Mammary epithelial cell (primary cell): ENCODE measurements at regions of chr6 and their contacts with region 1.

Region 1: DNA sequence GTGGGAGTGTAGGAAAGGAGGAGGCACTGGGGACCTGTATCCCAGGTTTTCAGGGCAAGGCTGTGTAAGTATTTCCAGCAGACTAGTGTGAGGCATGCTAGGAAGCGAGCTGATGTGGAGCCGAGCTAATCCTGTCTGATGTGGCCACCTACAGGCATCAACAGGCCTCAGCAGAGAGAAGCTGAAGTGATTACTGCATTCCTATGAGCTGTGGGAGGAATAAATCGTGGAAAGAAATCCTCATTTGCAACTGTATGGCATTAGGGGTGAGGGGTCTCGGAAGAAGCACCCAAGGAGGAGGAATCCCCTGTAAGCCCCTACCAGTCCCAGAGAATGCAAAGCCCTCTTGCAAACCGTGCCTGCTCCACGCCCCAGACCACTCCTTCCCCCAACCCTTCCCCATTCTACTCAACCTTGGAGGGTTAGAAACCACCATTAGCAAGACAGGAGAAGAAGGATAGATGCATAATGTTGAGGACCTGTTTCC is 41.6 kb downstream of the C6orf15 start:
- DNase-seq: peak; percentile 74
- H3K4me3 ChIP-seq: no peak overlapping the region
- H3K27ac ChIP-seq: no peak overlapping the region
- H3K4me1 ChIP-seq: peaks cover 4% of the 10 kb centered on the region
- H3K27me3 ChIP-seq: no peaks in the 10 kb centered on the region
- CTCF ChIP-seq: peak; percentile 87 to 93

Region 2: DNA sequence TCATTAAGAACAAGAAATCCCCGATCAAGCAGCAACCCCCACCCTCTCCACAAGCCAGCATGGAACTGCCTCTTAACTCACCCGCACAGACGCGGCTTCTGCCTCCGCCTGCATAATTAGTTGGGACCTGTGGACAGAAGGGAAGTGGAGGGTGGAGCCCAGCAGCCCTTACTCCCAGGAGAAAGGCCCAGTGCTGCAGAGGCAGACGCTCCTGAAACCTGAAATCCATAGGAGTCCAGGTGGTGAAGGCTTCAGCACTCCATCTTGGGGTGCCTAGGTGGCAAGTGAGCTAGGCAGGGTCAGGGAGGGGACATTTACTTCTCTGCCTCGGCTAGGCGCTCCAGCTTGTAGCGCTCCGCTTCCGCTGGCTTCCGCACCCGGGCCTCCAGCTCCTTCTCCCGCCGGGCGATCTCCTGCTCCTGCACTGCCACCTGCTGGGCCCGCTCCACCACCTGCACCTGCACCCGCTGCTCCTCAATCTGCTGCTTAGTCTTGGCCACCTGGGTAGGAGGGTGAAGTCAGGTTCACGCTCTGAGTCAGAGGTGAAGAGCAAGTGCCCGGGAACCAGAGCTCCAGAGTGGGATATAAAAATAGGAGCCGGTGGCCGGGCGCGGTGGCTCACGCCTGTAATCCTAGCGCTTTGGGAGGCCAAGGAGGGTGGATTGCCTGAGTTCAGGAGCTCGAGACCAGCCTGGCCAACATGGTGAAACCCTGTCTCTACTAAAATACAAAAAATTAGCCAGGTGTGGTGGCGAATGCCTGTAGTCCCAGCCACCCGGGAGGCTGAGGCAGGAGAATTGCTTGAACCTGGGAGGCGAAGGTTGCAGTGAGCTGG is 339.9 kb before region 1 on chr6:
- CTCF ChIA-PET with region 1: no interaction called
- dilution Hi-C with region 1: loop called (anchors 5 kb)
- in situ Hi-C with region 1: no loop called
- intact Hi-C with region 1: no loop called
- DNase-seq: peak; percentile 88
- H3K4me3 ChIP-seq: no peak overlapping the region
- H3K27ac ChIP-seq: no peak overlapping the region
- H3K4me1 ChIP-seq: peaks cover 5% of the 10 kb centered on the region
- H3K27me3 ChIP-seq: no peaks in the 10 kb centered on the region
- CTCF ChIP-seq: peak; percentile 81 to 95

Region 3: DNA sequence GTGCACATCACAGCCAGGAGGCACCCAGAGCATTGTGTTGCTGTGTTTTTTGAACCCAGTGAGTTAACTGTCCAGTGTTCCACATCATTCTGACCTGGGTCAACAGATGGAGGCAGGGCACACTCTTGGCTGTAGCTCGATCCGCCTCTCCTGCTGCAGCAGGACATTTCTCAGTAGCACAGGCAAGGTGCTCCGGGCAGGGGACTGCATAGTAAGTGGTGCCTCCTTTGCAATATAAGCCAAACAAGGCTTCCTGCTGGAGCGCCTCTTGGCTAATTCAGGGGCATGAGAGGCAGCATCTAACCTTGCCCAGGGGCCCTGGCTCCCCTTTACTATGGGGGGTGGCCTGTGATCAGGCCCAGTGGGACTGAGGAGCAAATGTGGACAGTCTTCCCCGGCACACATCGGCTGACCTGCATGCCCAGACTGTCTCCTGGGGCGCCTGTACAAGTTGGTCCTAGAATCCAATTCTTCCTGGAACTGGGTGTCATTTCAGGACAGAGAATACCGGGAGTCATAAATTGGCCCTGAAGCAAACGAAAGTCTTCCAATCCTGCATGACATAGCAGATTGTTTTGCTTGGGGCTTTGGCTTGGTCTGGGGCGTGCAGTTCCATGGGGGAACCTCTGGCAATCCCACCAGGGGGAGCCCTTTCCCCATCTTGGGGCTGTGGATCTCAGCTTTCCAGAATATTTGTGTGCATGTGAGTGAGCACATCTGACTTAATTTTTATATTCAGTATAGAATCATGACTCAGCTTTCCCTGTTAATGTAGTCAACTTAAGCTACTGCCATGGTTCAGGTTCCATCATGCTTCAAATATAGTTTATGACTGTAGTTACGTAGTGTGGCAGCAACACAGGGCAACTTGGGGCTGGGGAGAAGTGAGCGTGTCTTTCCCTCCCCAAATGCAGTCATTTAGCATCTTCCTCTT is 242.5 kb before region 1 on chr6:
- CTCF ChIA-PET with region 1: interaction called, 7 read pairs
- dilution Hi-C with region 1: loop called (anchors 5 kb)
- in situ Hi-C with region 1: no loop called
- intact Hi-C with region 1: loop called (anchors 1 kb)
- DNase-seq: peak; percentile 88
- H3K4me3 ChIP-seq: no peak overlapping the region
- H3K27ac ChIP-seq: peak overlapping the region; percentile 58
- H3K4me1 ChIP-seq: peaks cover 28% of the 10 kb centered on the region
- H3K27me3 ChIP-seq: no peaks in the 10 kb centered on the region
- CTCF ChIP-seq: peak; percentile 95

Region 4: DNA sequence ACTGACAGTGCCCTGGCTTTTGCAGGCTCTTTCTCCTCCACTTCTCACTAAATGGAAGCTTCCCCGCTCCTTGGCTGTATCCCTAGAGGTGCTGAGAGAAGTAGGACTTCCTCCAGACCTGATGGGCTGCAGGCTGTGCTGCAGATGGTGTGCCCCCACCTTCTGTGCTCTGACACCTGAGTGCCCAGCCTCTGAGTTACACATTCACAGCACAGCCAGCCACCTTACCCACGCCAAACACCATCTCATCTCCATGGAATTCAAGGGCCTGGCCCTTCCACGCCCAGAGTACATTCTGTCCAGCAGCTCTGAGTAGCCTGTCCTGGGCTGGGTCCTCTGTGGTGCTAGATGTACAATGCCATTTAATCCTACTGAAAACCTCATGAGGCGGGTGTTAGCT is 144.1 kb before region 1 on chr6:
- CTCF ChIA-PET with region 1: interaction called, 3 read pairs
- dilution Hi-C with region 1: no loop called
- in situ Hi-C with region 1: no loop called
- intact Hi-C with region 1: loop called (anchors 2 kb)
- DNase-seq: peak; percentile 43
- H3K4me3 ChIP-seq: no peak overlapping the region
- H3K27ac ChIP-seq: peak overlapping the region; percentile 69
- H3K4me1 ChIP-seq: peaks cover 49% of the 10 kb centered on the region
- H3K27me3 ChIP-seq: no peaks in the 10 kb centered on the region
- CTCF ChIP-seq: no peak

Region 5: DNA sequence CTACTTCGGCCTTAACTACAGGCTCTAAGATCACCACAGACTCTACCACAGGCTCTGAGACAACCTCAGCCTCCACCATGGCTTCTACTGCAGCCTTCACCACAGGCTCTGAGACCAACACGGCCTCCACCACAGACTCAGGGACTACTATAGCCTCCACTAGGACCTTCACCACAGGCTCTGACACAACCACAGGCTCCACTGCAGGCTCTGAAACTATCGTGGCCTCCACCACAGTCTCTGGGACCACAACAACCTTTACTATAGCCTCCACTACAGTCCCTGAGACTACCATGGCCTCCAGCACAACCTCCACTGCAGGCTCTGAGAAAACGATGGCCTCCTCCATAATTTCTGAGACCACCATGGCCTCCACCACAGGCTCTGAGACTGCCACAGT is 45.2 kb before region 1 on chr6:
- CTCF ChIA-PET with region 1: no interaction called
- dilution Hi-C with region 1: loop called (anchors 5 kb)
- in situ Hi-C with region 1: no loop called
- intact Hi-C with region 1: no loop called
- DNase-seq: no peak
- H3K4me3 ChIP-seq: no peak overlapping the region
- H3K27ac ChIP-seq: no peak overlapping the region
- H3K4me1 ChIP-seq: no peaks in the 10 kb centered on the region
- H3K27me3 ChIP-seq: no peaks in the 10 kb centered on the region
- CTCF ChIP-seq: no peak

Region 6: GRCh38 chr6:31087494-31088089 is 16.8 kb after region 1 on chr6:
- CTCF ChIA-PET with region 1: interaction called, 14 read pairs
- dilution Hi-C with region 1: no loop called
- in situ Hi-C with region 1: no loop called
- intact Hi-C with region 1: loop called (anchors 2 kb)
- DNase-seq: peak; percentile 73
- H3K4me3 ChIP-seq: no peak overlapping the region
- H3K27ac ChIP-seq: no peak overlapping the region
- H3K4me1 ChIP-seq: peaks cover 8% of the 10 kb centered on the region
- H3K27me3 ChIP-seq: no peaks in the 10 kb centered on the region
- CTCF ChIP-seq: peak; percentile 74